H1 (cell line): ENCODE measurements at regions of chr10 and their contacts with region 1.

Region 1: GRCh38 chr10:124053971-124054370 is 39.4 kb downstream of the CHST15 start:
- DNase-seq: no peak
- H3K4me3 ChIP-seq: no peak overlapping the region
- H3K27ac ChIP-seq: no peak overlapping the region
- H3K4me1 ChIP-seq: peaks cover 0 to 6% (median 2%) of the 10 kb centered on the region in 4 experiments; a peak in 3 of 7 replicates
- H3K27me3 ChIP-seq: no peaks in the 10 kb centered on the region
- CTCF ChIP-seq: no peak
- EP300 ChIP-seq: no peak
- POLR2A ChIP-seq: no peak
- RAD21 ChIP-seq: no peak

Region 2: GRCh38 chr10:123848564-123849457 is 205.2 kb before region 1 on chr10:
- CTCF ChIA-PET with region 1: no interaction called
- POLR2A ChIA-PET with region 1: no interaction called
- DNase-seq: no peak
- H3K4me3 ChIP-seq: no peak overlapping the region
- H3K27ac ChIP-seq: no peak overlapping the region
- H3K4me1 ChIP-seq: no peaks in the 10 kb centered on the region
- H3K27me3 ChIP-seq: no peaks in the 10 kb centered on the region
- CTCF ChIP-seq: no peak
- EP300 ChIP-seq: no peak
- POLR2A ChIP-seq: no peak
- RAD21 ChIP-seq: no peak

Region 3: DNA sequence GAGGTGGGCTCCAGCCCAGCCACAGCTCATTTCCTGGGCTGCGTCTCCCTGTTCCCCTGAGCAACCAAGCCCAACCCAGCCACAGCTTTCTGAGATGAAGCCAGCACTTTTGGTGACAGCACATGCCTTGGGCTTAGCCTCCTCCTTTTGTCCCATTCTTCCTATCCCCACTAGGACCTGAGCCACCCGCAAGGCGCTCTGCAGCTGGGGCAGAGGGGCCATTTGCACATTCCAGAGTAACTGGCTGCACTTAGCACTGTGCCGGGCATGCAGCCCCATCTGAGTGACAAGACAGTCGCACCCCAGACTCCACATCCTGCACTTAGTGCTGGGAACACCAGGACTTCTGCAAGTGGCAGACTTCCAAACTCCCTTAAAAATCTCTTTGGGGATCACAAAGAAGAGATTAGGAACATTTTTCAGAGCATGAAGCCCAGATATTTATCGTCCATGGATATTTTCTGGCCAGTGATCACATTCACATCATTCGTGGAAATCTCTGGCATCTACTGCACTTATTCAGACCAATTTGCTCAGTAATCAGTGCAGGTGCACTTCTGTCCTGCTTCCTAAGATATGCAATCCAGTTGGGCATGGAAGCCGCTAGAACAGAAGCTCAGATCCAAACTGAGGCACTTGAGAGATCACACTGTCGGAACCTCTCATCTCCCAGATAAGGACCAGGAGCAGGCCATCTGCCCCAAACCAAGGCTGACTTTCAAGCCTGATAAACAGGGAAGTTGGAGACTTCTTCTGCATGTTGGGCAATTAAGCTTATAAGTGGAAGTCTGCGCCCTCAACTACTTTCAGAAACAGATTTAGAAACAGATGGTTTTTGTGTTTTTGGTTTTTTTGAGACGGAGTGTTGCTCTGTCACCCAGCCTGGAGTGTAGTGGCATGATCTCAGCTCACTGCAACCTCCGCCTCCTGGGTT is 13.1 kb after region 1 on chr10:
- CTCF ChIA-PET with region 1: interaction called, 3 read pairs
- POLR2A ChIA-PET with region 1: interaction called, 20 read pairs
- DNase-seq: peak; percentile 34 to 64
- H3K4me3 ChIP-seq: no peak overlapping the region
- H3K27ac ChIP-seq: no peak overlapping the region
- H3K4me1 ChIP-seq: peaks cover 4 to 32% (median 25%) of the 10 kb centered on the region in 4 experiments
- H3K27me3 ChIP-seq: no peaks in the 10 kb centered on the region
- CTCF ChIP-seq: no peak
- EP300 ChIP-seq: no peak
- POLR2A ChIP-seq: no peak
- RAD21 ChIP-seq: no peak